Activated CD4-positive, alpha-beta T cell treated with anti-CD3 and anti-CD28 coated beads for 36 hours (primary cell): ENCODE measurements at regions of chr11 and their contacts with region 1.

Region 1: DNA sequence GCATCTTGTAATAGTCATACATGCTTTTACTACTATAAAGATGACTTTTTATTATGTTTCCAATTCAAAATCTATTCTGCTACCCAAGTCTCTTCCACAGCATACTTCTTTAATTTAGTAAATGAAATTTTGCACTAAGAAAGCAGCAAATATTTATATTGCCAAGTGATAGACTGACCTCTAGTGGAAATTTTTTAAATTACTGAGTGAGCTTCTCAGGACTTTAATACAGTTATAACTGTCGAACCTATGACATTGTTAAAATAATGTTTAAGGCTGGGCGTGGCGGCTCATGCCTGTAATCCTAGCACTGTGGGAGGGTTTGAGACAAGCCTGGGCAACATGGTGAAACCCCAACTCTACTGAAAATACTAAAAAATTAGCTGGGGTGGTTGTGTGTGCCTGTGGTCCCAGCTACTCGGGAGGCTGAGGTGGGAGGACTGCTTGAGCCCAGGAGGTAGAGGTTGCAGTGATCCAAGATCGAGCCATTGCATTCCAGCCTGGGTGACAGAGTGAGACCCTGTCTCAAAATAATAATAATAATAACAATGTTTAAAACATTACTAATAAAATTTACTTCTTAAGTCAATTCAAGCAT is 27.3 kb downstream of the STK33 start:
- DNase-seq: peak; percentile 5
- ATAC-seq: peak; percentile 30
- H3K4me3 Mint-ChIP-seq: no peak overlapping the region
- H3K27ac Mint-ChIP-seq: no peak overlapping the region
- H3K4me1 Mint-ChIP-seq: peaks cover 2% of the 10 kb centered on the region
- H3K27me3 Mint-ChIP-seq: peaks cover 22% of the 10 kb centered on the region

Region 2: DNA sequence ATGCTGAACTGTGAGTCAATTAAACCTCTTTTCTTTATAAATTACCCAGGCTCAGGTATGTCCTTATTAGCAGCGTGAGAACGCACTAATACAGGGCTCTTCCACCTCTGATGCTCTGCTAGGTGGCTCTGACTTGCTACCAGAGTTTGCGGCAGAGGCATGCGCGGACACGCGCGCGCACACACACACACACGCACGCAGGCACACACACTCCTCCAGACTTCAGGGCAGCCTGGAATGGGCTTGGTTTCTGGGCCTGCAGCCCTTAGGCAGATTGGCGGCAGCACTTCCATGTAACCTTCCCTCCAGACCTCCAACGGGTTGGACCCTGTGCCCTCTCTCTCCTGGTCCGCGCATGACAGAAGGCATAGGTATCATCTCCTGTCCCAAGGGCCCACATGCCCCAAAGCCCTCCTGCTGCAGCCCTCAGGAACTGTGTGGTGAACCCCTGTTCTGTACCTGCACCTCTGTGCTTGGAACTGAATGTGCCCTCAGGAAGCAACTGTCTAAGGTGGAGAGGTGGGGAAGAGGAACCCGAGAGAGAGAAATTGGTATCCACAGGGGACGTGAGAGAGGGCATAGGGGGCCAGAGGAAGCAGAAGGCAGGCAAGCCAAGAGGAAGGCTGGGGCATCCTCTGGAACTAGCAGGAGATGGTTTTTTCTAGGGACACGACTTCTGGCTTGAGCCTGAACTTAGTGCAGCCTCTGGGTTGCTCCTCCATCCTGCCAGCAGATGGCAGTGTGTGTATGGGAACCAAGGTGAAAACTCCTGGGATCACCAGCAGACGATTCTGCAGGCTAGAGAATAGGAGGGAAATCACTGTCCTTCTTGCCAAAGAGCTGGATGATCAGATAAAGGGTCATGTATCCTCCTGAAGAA is 374.5 kb before region 1 on chr11:
- CTCF ChIA-PET with region 1: interaction called, 4 read pairs
- POLR2A ChIA-PET with region 1: no interaction called
- intact Hi-C with region 1: loop called (anchors 1 kb)
- DNase-seq: peak; percentile 72
- ATAC-seq: peak; percentile 64
- H3K4me3 Mint-ChIP-seq: no peak overlapping the region
- H3K27ac Mint-ChIP-seq: no peak overlapping the region
- H3K4me1 Mint-ChIP-seq: no peaks in the 10 kb centered on the region
- H3K27me3 Mint-ChIP-seq: peaks cover 14% of the 10 kb centered on the region

Region 3: DNA sequence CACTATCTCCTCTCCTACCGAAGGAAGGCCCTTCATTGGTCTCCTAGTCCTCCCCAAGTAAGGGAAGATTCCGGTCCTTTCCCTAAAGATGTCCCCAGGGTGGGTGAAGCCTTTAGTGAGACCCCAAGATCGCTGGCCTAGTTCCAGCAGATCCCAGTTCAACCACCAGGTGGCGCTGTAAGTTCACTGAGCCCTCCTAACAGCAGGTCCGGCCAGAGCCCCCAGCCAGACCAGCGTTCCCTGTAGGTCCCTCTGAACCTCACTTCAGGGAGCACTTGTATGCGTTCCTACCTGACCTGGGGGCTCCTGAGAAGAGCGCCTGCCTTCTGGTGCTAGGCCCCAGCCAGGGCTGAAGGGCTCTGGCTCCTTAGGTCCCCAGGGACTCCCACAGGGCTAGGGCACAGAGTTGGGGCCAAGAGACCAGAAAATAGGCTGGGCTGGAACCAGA is 341.1 kb before region 1 on chr11:
- CTCF ChIA-PET with region 1: interaction called, 13 read pairs
- POLR2A ChIA-PET with region 1: no interaction called
- intact Hi-C with region 1: loop called (anchors 1 kb)
- DNase-seq: peak; percentile 82
- ATAC-seq: peak; percentile 70
- H3K4me3 Mint-ChIP-seq: no peak overlapping the region
- H3K27ac Mint-ChIP-seq: no peak overlapping the region
- H3K4me1 Mint-ChIP-seq: no peaks in the 10 kb centered on the region
- H3K27me3 Mint-ChIP-seq: no peaks in the 10 kb centered on the region

Region 4: GRCh38 chr11:8247312-8247711 is 319.4 kb before region 1 on chr11:
- CTCF ChIA-PET with region 1: interaction called, 4 read pairs
- POLR2A ChIA-PET with region 1: no interaction called
- intact Hi-C with region 1: loop called in 1 of 2 experiments (anchors 1 kb)
- DNase-seq: peak; percentile 59
- ATAC-seq: peak; percentile 47
- H3K4me3 Mint-ChIP-seq: no peak overlapping the region
- H3K27ac Mint-ChIP-seq: no peak overlapping the region
- H3K4me1 Mint-ChIP-seq: no peaks in the 10 kb centered on the region
- H3K27me3 Mint-ChIP-seq: peaks cover 4% of the 10 kb centered on the region

Region 5: GRCh38 chr11:8328848-8329330 is 237.8 kb before region 1 on chr11:
- CTCF ChIA-PET with region 1: no interaction called
- POLR2A ChIA-PET with region 1: no interaction called
- intact Hi-C with region 1: loop called (anchors 2 kb)
- DNase-seq: peak; percentile 92
- ATAC-seq: peak; percentile 99
- H3K4me3 Mint-ChIP-seq: no peak overlapping the region
- H3K27ac Mint-ChIP-seq: no peak overlapping the region
- H3K4me1 Mint-ChIP-seq: peaks cover 3% of the 10 kb centered on the region
- H3K27me3 Mint-ChIP-seq: peaks cover 8% of the 10 kb centered on the region

Region 6: DNA sequence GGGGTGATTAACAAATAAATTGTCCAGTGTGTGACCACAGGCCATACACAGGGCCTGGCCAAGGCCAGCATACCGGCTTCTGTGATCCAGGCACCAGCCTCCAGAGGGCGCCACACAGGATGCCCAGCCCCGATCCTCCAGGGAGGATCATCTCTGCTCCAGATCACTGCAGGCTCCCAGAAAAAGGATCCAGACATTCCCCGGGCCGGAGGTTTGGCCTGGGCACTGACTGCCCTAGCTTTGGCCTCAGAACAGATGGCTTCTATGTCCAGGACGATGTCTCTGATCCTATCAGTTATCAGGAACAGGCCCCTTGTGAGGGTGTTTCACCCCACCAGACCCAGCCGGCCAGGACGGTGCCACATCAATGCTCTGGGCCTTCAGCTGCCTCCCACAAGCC is 228.6 kb before region 1 on chr11:
- CTCF ChIA-PET with region 1: no interaction called
- POLR2A ChIA-PET with region 1: no interaction called
- intact Hi-C with region 1: loop called (anchors 1 to 2 kb)
- DNase-seq: peak; percentile 68
- ATAC-seq: peak; percentile 53
- H3K4me3 Mint-ChIP-seq: no peak overlapping the region
- H3K27ac Mint-ChIP-seq: no peak overlapping the region
- H3K4me1 Mint-ChIP-seq: peaks cover 8% of the 10 kb centered on the region
- H3K27me3 Mint-ChIP-seq: no peaks in the 10 kb centered on the region

Region 7: GRCh38 chr11:8477680-8478079 is 89.0 kb before region 1 on chr11:
- CTCF ChIA-PET with region 1: no interaction called
- POLR2A ChIA-PET with region 1: no interaction called
- intact Hi-C with region 1: no loop called
- DNase-seq: no peak
- ATAC-seq: no peak
- H3K4me3 Mint-ChIP-seq: no peak overlapping the region
- H3K27ac Mint-ChIP-seq: no peak overlapping the region
- H3K4me1 Mint-ChIP-seq: no peaks in the 10 kb centered on the region
- H3K27me3 Mint-ChIP-seq: peaks cover 2% of the 10 kb centered on the region